ENCODE measurements at regions of chr4 and their contacts with region 1.

Region 1: GRCh38 chr4:40056716-40057585 is at the start of gene N4BP2:
- DNase-seq: peak; percentile 65 to 79
- H3K4me3 ChIP-seq: peak within 1 kb of the TSS; percentile 93
- H3K27ac ChIP-seq: peak within 1 kb of the TSS; percentile 88
- H3K4me1 ChIP-seq: peaks cover 26% of the 10 kb centered on the region
- H3K27me3 ChIP-seq: no peaks in the 10 kb centered on the region
- CTCF ChIP-seq: peak; percentile 55; the same call in 1 of the 2 replicates
- total RNA-seq, gene N4BP2: 6.5 and 7.8 TPM in 2 replicates

Region 2: GRCh38 chr4:39469429-39470077 is 587.4 kb before region 1 on chr4:
- CTCF ChIA-PET with region 1: no interaction called
- POLR2A ChIA-PET with region 1: no interaction called
- intact Hi-C with region 1: loop called (anchors 5 kb)
- DNase-seq: peak; percentile 52 to 77
- H3K4me3 ChIP-seq: no peak overlapping the region
- H3K27ac ChIP-seq: peak overlapping the region; percentile 65
- H3K4me1 ChIP-seq: peaks cover 9% of the 10 kb centered on the region
- H3K27me3 ChIP-seq: no peaks in the 10 kb centered on the region
- CTCF ChIP-seq: peak; percentile 93

Region 3: DNA sequence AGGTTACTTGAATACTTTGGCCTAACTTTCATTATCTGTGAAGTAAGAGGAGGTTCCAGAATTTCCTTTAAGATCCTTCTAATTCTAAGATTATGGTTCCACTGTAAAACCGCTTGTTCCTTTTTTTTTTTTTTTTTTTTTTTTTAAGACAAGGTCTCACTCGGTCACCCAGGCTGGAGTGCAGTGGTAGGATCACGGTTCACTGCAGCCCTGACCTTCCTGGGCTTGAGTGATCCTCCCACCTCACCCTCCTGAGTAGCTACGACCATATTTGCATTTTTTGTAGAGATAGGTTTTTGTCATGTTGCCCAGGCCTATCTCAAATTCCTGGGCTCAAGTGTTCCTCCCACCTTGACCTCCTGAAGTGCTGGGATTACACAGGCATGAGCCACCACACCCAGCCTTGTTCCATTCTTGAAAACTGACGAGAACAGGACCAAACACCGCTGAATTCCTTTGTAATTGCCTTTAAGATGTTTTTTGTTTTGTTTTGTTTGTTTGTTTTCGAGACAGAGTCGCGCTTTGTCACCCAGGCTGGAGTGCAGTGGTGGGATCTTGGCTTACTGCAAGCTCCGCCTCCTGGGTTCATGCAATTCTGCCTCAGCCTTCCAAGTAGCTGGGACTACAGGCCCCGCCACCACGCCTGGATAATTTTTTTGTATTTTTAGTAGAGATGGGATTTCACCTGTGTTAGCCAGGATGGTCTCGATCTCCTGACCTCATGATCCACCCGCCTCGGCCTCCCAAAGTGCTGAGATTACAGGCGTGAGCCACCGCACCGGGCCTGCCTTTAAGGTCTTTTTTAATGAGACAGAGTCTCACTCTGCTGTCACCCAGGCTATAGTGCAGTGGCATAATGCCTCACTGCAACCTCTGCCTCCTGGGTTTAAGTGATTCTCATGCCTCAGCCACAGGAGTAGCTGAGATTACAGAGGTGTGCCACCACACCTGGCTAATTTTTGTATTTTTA is 86.0 kb before region 1 on chr4:
- CTCF ChIA-PET with region 1: no interaction called
- POLR2A ChIA-PET with region 1: no interaction called
- intact Hi-C with region 1: no loop called
- DNase-seq: peak; percentile 60 to 71
- H3K4me3 ChIP-seq: no peak overlapping the region
- H3K27ac ChIP-seq: 0 out of 2 replicates have a peak overlapping the region, but pooled peaks have one; percentile 27
- H3K4me1 ChIP-seq: peaks cover 8% of the 10 kb centered on the region
- H3K27me3 ChIP-seq: no peaks in the 10 kb centered on the region
- CTCF ChIP-seq: no peak

Region 4: GRCh38 chr4:40020221-40020943 is 36.6 kb before region 1 on chr4:
- CTCF ChIA-PET with region 1: no interaction called
- POLR2A ChIA-PET with region 1: interaction called, 11 read pairs
- intact Hi-C with region 1: no loop called
- DNase-seq: no peak
- H3K4me3 ChIP-seq: no peak overlapping the region
- H3K27ac ChIP-seq: no peak overlapping the region
- H3K4me1 ChIP-seq: 0 out of 2 replicates have a peak, but pooled peaks cover 4% of the 10 kb centered on the region
- H3K27me3 ChIP-seq: no peaks in the 10 kb centered on the region
- CTCF ChIP-seq: no peak

Region 5: DNA sequence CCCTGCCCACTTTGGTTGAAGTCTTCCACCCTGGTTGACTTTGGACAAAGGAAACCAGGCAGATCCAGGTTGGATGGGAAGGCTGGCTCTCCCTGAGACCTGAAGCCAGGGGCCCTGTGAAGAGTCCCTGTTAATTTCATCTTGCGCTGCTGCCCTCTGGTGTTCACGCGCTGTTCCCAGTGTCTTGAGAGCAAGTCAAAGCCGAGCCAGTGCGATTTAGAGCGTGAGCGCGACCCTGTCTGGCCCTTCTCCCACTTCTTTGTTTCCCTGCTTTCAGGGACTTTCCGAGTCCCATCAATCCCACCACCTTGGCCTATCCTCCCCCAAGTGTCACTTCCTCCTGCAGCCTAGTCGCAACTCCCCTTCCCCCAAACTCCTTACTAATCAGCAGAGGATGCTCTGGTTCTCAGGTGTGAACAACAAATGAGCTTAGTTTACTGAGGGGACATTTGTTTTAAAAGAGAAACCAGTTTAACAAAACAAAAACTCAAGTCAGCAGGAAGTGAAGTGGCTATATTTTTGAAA is 252.4 kb after region 1 on chr4:
- CTCF ChIA-PET with region 1: interaction called, 3 read pairs
- POLR2A ChIA-PET with region 1: no interaction called
- intact Hi-C with region 1: loop called (anchors 1 kb)
- DNase-seq: peak; percentile 66 to 77
- H3K4me3 ChIP-seq: peak overlapping the region; percentile 45; the same call in 1 of the 2 replicates
- H3K27ac ChIP-seq: no peak overlapping the region
- H3K4me1 ChIP-seq: peaks cover 31% of the 10 kb centered on the region
- H3K27me3 ChIP-seq: no peaks in the 10 kb centered on the region
- CTCF ChIP-seq: peak; percentile 83

Region 6: GRCh38 chr4:40629401-40630334 is 572.7 kb after region 1 on chr4 and contains the start of gene RBM47:
- CTCF ChIA-PET with region 1: no interaction called
- POLR2A ChIA-PET with region 1: no interaction called
- intact Hi-C with region 1: loop called (anchors 5 kb)
- DNase-seq: peak; percentile 89 to 94
- H3K4me3 ChIP-seq: peak within 1 kb of the TSS; percentile 96
- H3K27ac ChIP-seq: peak within 1 kb of the TSS; percentile 99
- H3K4me1 ChIP-seq: peaks cover 44% of the 10 kb centered on the region
- H3K27me3 ChIP-seq: no peaks in the 10 kb centered on the region
- CTCF ChIP-seq: no peak; the same call in 1 of the 2 replicates
- total RNA-seq, gene RBM47: 78.0 and 79.0 TPM in 2 replicates